ENCODE measurements at regions of chr20 and their contacts with region 1.

Region 1: GRCh38 chr20:43681468-43681942 is 14.6 kb downstream of the MYBL2 start:
- DNase-seq: peak; percentile 52
- ATAC-seq: peak; percentile 40
- H3K4me3 Mint-ChIP-seq: peak overlapping the region; percentile 73
- H3K27ac Mint-ChIP-seq: peak overlapping the region; percentile 97
- H3K4me1 Mint-ChIP-seq: peaks cover 64% of the 10 kb centered on the region
- H3K27me3 Mint-ChIP-seq: no peaks in the 10 kb centered on the region
- CTCF ChIP-seq: no peak

Region 2: GRCh38 chr20:43514062-43514999 is 167.2 kb before region 1 on chr20:
- CTCF ChIA-PET with region 1: interaction called, 4 read pairs
- POLR2A ChIA-PET with region 1: interaction called, 3 read pairs
- intact Hi-C with region 1: loop called (anchors 2 kb)
- DNase-seq: peak; percentile 83
- ATAC-seq: peak; percentile 89
- H3K4me3 Mint-ChIP-seq: peak overlapping the region; percentile 93
- H3K27ac Mint-ChIP-seq: peak overlapping the region; percentile 88
- H3K4me1 Mint-ChIP-seq: peaks cover 22% of the 10 kb centered on the region
- H3K27me3 Mint-ChIP-seq: peaks cover 11% of the 10 kb centered on the region
- CTCF ChIP-seq: no peak

Region 3: GRCh38 chr20:43558412-43559146 is 122.9 kb before region 1 on chr20 and contains the start of gene SGK2:
- CTCF ChIA-PET with region 1: no interaction called
- POLR2A ChIA-PET with region 1: no interaction called
- intact Hi-C with region 1: no loop called
- DNase-seq: no peak
- ATAC-seq: no peak
- H3K4me3 Mint-ChIP-seq: no peak within 1 kb of the TSS
- H3K27ac Mint-ChIP-seq: no peak within 1 kb of the TSS
- H3K4me1 Mint-ChIP-seq: no peaks in the 10 kb centered on the region
- H3K27me3 Mint-ChIP-seq: no peaks in the 10 kb centered on the region
- CTCF ChIP-seq: no peak
- total RNA-seq, gene SGK2: 0.73 and 1.1 TPM in 2 replicates

Region 4: DNA sequence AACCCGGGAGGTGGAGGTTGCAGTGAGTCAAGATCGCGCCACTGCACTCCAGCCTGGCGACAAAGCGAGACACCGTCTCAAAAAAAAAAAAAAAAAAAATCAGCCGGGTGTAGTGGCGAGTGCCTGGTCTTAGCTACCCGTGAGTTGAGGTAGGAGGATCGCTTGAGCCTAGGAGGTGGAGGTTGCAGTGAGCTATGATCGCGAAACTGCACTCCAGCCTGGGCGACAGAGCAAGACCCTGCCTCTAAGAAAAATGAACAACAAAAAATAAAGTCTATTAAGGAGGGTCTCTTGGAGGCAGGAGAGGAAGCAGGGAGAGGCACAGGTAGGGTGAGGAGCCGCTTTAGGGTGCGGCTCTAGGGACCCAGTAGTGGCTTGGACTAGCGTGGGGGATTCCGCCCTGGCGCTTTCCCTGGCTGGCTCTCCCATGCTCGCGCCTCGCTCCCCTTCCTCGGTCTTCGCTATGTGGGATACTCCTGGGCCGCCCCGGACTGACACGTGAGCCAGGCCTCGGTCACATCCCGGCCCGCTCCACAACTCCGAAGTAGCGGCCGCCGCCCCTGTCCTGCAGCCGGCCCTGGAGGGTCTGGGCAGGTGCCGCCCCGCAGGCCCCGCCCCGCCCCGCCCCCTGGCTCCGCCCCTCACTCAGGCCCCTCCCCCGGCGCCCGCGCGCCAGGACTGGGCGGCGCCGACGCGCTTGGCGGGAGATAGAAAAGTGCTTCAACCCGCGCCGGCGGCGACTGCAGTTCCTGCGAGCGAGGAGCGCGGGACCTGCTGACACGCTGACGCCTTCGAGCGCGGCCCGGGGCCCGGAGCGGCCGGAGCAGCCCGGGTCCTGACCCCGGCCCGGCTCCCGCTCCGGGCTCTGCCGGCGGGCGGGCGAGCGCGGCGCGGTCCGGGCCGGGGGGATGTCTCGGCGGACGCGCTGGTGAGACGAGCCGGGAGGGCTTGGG is 14.9 kb before region 1 on chr20 and contains the start of gene MYBL2:
- CTCF ChIA-PET with region 1: interaction called, 9 read pairs
- POLR2A ChIA-PET with region 1: interaction called, 287 read pairs
- intact Hi-C with region 1: loop called (anchors 1 kb)
- DNase-seq: peak; percentile 77
- ATAC-seq: peak; percentile 78
- H3K4me3 Mint-ChIP-seq: peak within 1 kb of the TSS; percentile 89
- H3K27ac Mint-ChIP-seq: peak within 1 kb of the TSS; percentile 92
- H3K4me1 Mint-ChIP-seq: peaks cover 54% of the 10 kb centered on the region
- H3K27me3 Mint-ChIP-seq: no peaks in the 10 kb centered on the region
- CTCF ChIP-seq: no peak
- total RNA-seq, gene MYBL2: 99.5 and 102 TPM in 2 replicates

Region 5: GRCh38 chr20:43710370-43711044 is 29.0 kb after region 1 on chr20:
- CTCF ChIA-PET with region 1: no interaction called
- POLR2A ChIA-PET with region 1: interaction called, 4 read pairs
- intact Hi-C with region 1: loop called (anchors 1 kb)
- DNase-seq: no peak
- ATAC-seq: peak; percentile 75
- H3K4me3 Mint-ChIP-seq: peak overlapping the region; percentile 7
- H3K27ac Mint-ChIP-seq: peak overlapping the region; percentile 63
- H3K4me1 Mint-ChIP-seq: peaks cover 23% of the 10 kb centered on the region
- H3K27me3 Mint-ChIP-seq: no peaks in the 10 kb centered on the region
- CTCF ChIP-seq: no peak

Region 6: DNA sequence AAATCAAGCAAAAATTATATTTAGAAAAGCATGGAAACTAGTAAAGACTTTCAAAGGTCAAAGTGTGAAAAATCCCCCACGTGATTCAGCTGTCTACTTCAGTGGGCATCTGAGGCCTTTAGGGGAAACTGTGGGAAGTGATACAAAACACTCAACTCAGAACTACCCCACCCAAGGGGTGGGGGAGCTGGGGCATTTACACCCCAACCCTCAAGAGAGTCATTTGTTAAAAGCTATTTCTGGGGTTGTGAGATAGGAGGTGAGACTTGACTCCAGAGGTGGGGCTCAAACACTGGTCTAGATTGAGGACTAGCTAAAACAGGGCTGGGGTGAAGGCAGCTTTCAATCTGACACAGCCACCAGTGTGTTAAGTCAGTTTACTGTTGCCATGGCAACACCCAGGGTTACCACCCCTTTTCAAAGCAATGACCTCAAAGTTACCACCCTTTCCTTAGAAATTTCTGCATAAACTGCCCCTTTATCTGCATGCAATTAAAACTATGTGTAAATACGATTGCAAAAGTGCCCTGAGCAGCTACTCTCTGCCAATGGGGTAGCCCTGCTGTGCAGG is 55.2 kb after region 1 on chr20:
- CTCF ChIA-PET with region 1: no interaction called
- POLR2A ChIA-PET with region 1: interaction called, 12 read pairs
- intact Hi-C with region 1: loop called (anchors 2 kb)
- DNase-seq: no peak
- ATAC-seq: peak; percentile 83
- H3K4me3 Mint-ChIP-seq: peak overlapping the region; percentile 35
- H3K27ac Mint-ChIP-seq: peak overlapping the region; percentile 62
- H3K4me1 Mint-ChIP-seq: peaks cover 44% of the 10 kb centered on the region
- H3K27me3 Mint-ChIP-seq: no peaks in the 10 kb centered on the region
- CTCF ChIP-seq: no peak

Region 7: GRCh38 chr20:44080646-44081267 is 399.3 kb after region 1 on chr20:
- CTCF ChIA-PET with region 1: no interaction called
- POLR2A ChIA-PET with region 1: no interaction called
- intact Hi-C with region 1: loop called (anchors 2 kb)
- DNase-seq: peak; percentile 52
- ATAC-seq: peak; percentile 99
- H3K4me3 Mint-ChIP-seq: no peak overlapping the region
- H3K27ac Mint-ChIP-seq: no peak overlapping the region
- H3K4me1 Mint-ChIP-seq: peaks cover 4% of the 10 kb centered on the region
- H3K27me3 Mint-ChIP-seq: no peaks in the 10 kb centered on the region
- CTCF ChIP-seq: peak; percentile 56

Region 8: DNA sequence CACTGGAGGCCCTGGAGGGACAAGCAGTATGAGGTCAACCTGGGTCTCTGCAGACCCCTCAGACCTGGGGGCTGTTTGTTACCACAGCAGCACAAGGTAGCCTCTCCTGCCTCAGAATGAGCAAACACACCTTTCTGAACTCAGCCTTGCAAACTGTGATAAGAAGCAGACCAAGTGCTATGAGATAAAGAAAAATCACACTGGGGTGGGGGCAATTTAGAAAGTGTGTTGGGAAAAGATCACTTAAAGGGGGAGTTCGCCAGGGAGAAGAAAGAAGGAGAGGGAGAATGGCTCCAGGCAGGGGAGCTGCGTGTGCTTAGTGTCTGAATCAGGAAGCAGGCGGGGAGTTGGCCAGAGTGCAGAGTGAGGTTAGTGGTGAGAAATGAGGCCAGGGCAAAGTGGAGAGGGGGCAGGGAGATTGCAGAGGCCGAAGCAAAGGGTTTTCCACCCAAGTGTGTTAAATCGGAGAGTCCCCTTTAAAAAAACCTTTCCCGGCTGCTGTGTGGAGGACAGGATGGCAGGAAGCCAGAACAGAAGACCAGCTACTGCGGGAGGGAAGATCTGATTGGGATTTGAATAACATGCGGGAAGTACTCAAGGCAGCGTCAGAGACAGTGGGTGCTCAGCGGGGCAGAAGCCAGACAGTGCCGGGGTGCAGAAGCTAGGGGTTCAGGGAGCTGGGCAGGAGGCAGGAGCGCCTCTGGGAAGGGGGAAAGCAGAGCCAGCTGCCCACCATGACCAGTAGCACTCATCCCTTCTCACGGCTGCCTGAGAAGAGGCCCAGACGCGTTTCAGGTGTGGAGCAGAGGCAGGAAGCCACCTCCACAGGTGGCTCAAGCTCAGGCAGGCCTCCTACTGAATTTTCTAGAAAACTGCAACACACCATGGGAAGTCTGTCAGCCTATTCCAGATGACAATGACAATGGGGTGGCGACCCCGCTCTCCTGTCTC is 961.0 kb after region 1 on chr20:
- CTCF ChIA-PET with region 1: no interaction called
- POLR2A ChIA-PET with region 1: no interaction called
- intact Hi-C with region 1: loop called (anchors 5 kb)
- DNase-seq: no peak
- ATAC-seq: peak; percentile 15
- H3K4me3 Mint-ChIP-seq: peak overlapping the region; percentile 42
- H3K27ac Mint-ChIP-seq: peak overlapping the region; percentile 73
- H3K4me1 Mint-ChIP-seq: peaks cover 69% of the 10 kb centered on the region
- H3K27me3 Mint-ChIP-seq: no peaks in the 10 kb centered on the region
- CTCF ChIP-seq: no peak